Ascending aorta (tissue), 2 donors: ENCODE measurements at regions of chr19 and their contacts with region 1.

Region 1: GRCh38 chr19:58154679-58155648 is 4.4 kb upstream of the ZNF329 start:
- DNase-seq: peak; percentile 77 to 98
- H3K4me3 ChIP-seq: peak overlapping the region; percentile 84 to 86
- H3K27ac ChIP-seq: peak overlapping the region; percentile 93 to 95
- H3K4me1 ChIP-seq: peaks cover 5 to 20% of the 10 kb centered on the region in 2 donors
- H3K27me3 ChIP-seq: no peaks in the 10 kb centered on the region
- CTCF ChIP-seq: peak; percentile 97 to 98 (median 98)

Region 2: DNA sequence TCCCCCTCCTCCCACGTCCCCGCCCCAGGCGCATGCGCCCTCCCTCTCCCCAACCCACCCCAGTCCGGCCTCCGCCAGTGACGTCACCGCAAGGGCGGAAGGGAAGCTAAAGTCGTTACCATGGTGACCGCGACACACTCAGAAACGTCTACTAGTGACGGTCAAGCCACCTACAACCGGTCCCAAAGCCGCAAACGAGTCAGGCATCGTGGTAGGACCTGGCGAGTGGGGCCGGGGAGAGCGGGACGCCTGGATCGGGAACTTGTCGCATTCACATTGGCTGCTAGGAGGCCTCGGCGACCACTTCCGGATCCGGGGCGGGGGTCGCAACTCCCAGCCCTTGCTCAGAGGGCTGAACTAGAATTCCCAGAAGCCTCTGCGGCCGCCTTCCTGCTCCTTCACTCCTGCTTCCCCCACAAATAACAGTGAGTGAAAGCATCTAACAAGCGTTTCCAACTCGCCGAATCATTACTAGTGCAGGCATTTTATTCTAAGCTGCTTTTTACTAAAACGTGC is 1840.3 kb before region 1 on chr19 and contains the start of gene ZSCAN5A:
- intact Hi-C with region 1: loop called (anchors 10 kb)
- DNase-seq: peak; percentile 87 to 98
- H3K4me3 ChIP-seq: peak within 1 kb of the TSS; percentile 72 to 86
- H3K27ac ChIP-seq: peak within 1 kb of the TSS; percentile 91 to 98
- H3K4me1 ChIP-seq: peaks cover 0 to 6% of the 10 kb centered on the region in 2 donors
- H3K27me3 ChIP-seq: no peaks in the 10 kb centered on the region
- CTCF ChIP-seq: no peak
- total RNA-seq, gene ZSCAN5A: 13.3 TPM

Region 3: GRCh38 chr19:57103573-57104277 is 1051.2 kb before region 1 on chr19:
- intact Hi-C with region 1: loop called (anchors 2 kb)
- DNase-seq: peak in 1 of 2 donors; percentile 67
- H3K4me3 ChIP-seq: peak overlapping the region in 1 of 2 donors; percentile 37
- H3K27ac ChIP-seq: no peak overlapping the region
- H3K4me1 ChIP-seq: no peaks in the 10 kb centered on the region
- H3K27me3 ChIP-seq: no peaks in the 10 kb centered on the region
- CTCF ChIP-seq: peak; percentile 63 to 88 (median 76)

Region 4: GRCh38 chr19:57583521-57584416 is 571.2 kb before region 1 on chr19 and contains the start of gene ZIK1:
- intact Hi-C with region 1: loop called (anchors 10 kb)
- DNase-seq: peak; percentile 39 to 94
- H3K4me3 ChIP-seq: peak within 1 kb of the TSS; percentile 61 to 68
- H3K27ac ChIP-seq: peak within 1 kb of the TSS in 1 of 2 donors; percentile 15
- H3K4me1 ChIP-seq: peaks cover 0 to 8% of the 10 kb centered on the region in 2 donors
- H3K27me3 ChIP-seq: no peaks in the 10 kb centered on the region
- CTCF ChIP-seq: no peak
- total RNA-seq, gene ZIK1: 0.53 TPM

Region 5: GRCh38 chr19:57914531-57914930 is 240.4 kb before region 1 on chr19:
- intact Hi-C with region 1: loop called (anchors 5 kb)
- DNase-seq: no peak
- H3K4me3 ChIP-seq: no peak overlapping the region
- H3K27ac ChIP-seq: no peak overlapping the region
- H3K4me1 ChIP-seq: peaks cover 0 to 7% of the 10 kb centered on the region in 2 donors
- H3K27me3 ChIP-seq: no peaks in the 10 kb centered on the region
- CTCF ChIP-seq: no peak

Region 6: DNA sequence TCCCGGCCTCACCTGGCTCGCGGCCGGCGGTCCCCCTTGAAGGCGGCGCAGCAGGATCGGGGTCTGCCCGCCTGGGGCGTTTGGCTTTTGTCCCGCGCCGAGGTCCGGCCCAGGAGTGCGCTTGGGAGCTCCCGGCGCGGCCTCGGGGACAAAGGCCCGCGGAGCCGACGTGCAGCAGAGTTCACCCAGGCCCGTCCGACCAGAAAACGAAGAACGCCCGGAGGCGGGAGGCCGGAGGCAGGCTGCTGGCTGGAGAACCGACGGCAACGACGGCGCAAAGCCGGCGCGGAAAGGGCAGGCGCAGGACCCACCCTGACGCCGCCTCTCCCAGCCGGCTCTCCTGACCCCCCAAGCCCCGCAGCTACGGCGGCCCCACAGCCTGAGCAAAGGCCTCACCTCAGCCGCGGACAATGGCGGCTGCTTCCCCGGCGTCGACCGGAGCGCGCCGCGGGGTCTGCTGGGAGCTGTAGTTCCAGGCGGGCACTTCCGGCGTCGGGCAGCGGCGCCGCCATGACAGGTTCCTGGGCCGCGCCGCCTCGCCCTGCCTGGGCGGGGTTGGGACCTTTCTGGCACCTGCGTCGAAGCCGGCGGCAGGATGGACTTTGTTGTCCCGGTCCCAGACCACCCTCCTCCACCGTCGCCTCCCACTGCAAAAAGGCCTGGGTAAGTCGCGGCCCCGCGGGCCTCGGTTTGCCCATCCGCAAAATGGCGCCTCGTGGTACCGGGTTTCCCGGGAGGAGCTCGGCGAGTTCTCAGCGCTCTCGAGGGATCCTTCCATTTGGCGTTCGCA is 152.4 kb before region 1 on chr19 and contains the start of gene ZNF606:
- intact Hi-C with region 1: loop called (anchors 5 kb)
- DNase-seq: peak; percentile 25 to 90
- H3K4me3 ChIP-seq: peak within 1 kb of the TSS; percentile 78 to 98
- H3K27ac ChIP-seq: peak within 1 kb of the TSS; percentile 89 to 93
- H3K4me1 ChIP-seq: peaks cover 4 to 11% of the 10 kb centered on the region in 2 donors
- H3K27me3 ChIP-seq: no peaks in the 10 kb centered on the region
- CTCF ChIP-seq: no peak
- total RNA-seq, gene ZNF606: 1.5 TPM

Region 7: DNA sequence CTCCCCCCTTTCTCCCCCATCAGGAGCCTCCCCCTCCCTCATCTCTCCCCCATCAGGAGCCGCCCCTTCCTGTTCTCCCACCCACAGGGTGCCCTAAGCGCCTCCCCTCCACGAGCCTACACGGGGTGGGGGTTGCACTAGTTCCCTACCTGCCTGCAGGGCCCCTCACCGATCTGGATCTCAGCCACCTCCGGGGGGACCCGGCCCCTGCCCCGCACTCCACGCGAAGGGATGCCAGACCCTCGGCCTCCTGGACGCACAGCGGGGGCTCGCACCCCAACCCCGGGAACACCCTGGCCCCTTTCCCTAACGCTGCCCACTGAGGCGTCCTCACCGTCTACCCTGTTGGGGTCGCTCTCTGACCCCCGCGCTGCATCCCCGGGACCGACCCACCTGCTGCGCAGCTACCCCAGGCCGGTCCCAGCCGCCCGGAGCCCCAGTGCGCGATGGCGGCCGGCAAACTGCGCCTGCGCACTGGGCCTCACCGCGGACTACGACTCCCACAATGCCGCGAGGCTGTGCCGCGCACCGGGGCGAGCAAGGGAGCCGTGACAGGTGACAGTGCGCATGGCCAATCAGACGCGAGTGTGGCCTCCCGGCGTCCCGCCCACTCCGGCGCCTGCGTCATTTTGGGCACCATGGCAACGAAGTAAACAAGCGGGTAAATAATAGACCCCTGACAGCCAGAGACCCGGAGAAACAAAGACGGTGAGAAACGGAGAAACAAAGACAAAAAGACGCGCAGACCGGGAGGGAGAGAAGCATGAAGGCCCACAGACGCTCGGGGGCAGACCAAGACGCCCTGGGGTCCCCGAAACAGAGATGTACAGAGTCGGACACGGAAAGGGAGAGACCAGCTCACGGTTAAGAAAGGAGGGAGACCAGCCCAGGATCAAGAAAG is 56.9 kb before region 1 on chr19 and contains the start of gene ZSCAN18:
- intact Hi-C with region 1: loop called (anchors 1 kb)
- DNase-seq: peak; percentile 90 to 99
- H3K4me3 ChIP-seq: peak within 1 kb of the TSS; percentile 97 to 99
- H3K27ac ChIP-seq: peak within 1 kb of the TSS; percentile 97 to 98
- H3K4me1 ChIP-seq: peaks cover 0 to 9% of the 10 kb centered on the region in 2 donors
- H3K27me3 ChIP-seq: no peaks in the 10 kb centered on the region
- CTCF ChIP-seq: no peak
- total RNA-seq, gene ZSCAN18: 181 TPM

Region 8: DNA sequence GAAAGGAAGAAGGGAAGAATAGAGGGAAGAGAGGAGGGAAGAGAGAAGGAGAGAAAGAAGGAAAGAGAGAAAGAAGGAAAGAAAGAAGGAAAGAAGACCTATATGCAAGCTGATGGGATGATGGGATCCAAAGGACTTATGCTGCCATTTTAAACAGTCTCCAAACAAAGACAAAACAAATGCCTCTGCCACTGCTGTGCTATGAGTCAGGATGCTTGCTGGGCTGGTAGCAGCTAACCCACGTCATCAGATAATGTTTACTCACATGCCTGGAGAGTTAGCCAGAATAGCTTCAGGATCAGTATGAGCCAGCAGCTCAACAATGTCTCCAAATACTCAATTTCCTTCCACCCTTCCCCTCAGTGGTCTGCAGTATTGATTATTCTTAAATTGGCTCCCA is 15.9 kb after region 1 on chr19:
- intact Hi-C with region 1: no loop called
- DNase-seq: no peak
- H3K4me3 ChIP-seq: no peak overlapping the region
- H3K27ac ChIP-seq: no peak overlapping the region
- H3K4me1 ChIP-seq: no peaks in the 10 kb centered on the region
- H3K27me3 ChIP-seq: no peaks in the 10 kb centered on the region
- CTCF ChIP-seq: no peak